Endothelial cell of umbilical vein (primary cell): ENCODE measurements at regions of chr7 and their contacts with region 1.

Region 1: GRCh38 chr7:104814631-104815400 is 199.2 kb upstream of the KMT2E start:
- DNase-seq: no peak
- H3K4me3 ChIP-seq: no peak overlapping the region
- H3K27ac ChIP-seq: no peak overlapping the region
- H3K4me1 ChIP-seq: no peaks in the 10 kb centered on the region
- H3K27me3 ChIP-seq: peaks cover 9 to 10% of the 10 kb centered on the region in 2 experiments
- CTCF ChIP-seq: no peak
- POLR2A ChIP-seq: no peak

Region 2: DNA sequence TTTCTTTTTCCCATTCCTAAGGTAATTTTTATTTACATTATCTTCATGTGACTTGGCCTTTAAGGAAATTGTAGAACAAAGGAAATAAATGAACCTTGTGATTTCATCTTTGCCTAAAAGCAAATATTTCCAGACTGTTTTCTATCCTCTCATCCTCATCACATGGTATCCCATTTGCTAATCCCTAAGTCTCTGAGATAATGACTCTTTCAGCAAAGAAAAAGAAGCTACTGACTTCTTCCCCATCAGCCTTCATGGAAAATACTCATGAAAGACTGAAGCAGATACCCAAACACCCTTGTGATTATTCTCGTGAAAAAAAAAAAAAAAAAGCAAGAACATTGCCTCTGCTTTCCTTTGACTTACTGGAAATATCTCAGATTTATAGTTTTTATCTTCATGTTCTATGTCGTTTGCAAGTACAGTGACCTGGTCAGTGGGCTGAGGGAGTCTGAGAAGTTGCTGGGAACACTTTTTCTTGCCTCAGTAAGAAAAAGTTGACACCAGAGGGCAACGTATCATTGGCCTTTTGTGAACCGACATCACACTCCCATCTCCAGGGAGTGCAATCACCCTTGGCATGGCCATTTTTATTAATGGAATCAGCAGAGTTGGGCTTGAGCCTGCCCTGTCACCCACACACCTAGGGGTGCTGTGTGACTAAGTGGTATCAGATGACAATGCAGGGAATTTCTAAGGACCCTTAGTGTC is 46.8 kb before region 1 on chr7:
- CTCF ChIA-PET with region 1: no interaction called
- POLR2A ChIA-PET with region 1: no interaction called
- dilution Hi-C with region 1: no loop called
- intact Hi-C with region 1: loop called (anchors 5 kb)
- DNase-seq: no peak
- H3K4me3 ChIP-seq: no peak overlapping the region
- H3K27ac ChIP-seq: no peak overlapping the region
- H3K4me1 ChIP-seq: no peaks in the 10 kb centered on the region
- H3K27me3 ChIP-seq: peaks cover 4 to 5% of the 10 kb centered on the region in 2 experiments
- CTCF ChIP-seq: peak in 1 of 2 donors; percentile 14
- POLR2A ChIP-seq: no peak

Region 3: DNA sequence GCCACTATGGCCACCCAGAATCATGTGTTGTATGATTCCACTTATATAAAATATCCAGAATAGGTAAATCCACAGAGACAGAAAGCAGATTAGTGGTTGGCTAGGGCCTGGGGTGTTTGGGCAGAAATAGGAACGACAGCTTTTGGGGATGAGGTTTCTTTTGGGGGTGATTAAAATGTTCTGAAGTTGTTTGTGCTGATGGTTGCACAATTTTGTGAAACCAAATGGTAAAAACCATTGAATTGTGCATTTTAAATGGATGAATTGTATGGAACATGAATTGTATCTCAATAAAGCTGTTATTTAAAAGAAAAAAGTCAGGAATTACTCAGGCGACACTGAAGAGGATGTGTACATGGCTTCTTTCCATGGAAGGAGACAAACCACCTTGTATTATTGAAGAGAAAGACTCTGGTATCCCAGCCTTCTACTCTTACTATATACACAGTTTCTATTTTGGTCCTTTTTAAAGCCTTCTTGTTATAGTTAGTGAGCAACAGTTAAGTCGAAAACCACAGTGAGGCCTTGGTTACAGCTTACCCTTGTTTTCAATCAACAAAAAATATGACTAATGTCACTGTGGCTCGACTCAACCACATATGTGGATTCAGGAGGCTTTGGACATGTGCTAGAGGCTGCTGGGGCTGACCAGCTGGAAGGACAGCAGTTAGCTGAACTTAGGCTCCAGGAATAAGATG is 142.1 kb after region 1 on chr7:
- CTCF ChIA-PET with region 1: no interaction called
- POLR2A ChIA-PET with region 1: no interaction called
- dilution Hi-C with region 1: no loop called
- intact Hi-C with region 1: no loop called
- DNase-seq: no peak
- H3K4me3 ChIP-seq: no peak overlapping the region
- H3K27ac ChIP-seq: no peak overlapping the region
- H3K4me1 ChIP-seq: peaks cover 6% of the 10 kb centered on the region
- H3K27me3 ChIP-seq: no peaks in the 10 kb centered on the region
- CTCF ChIP-seq: no peak
- POLR2A ChIP-seq: no peak